Activated CD4-positive, alpha-beta T cell treated with anti-CD3 and anti-CD28 coated beads, Interleukin-2, amount 10 ng/mL, durations not matched to agents 24 days and 14 days (primary cell): ENCODE measurements at regions of chr12 and their contacts with region 1.

Region 1: GRCh38 chr12:94101738-94102660 is 46.4 kb upstream of the PLXNC1 start:
- DNase-seq: peak; percentile 96
- H3K4me3 Mint-ChIP-seq: peak overlapping the region; percentile 88
- H3K27ac Mint-ChIP-seq: peak overlapping the region; percentile 84
- H3K4me1 Mint-ChIP-seq: peaks cover 37% of the 10 kb centered on the region
- H3K27me3 Mint-ChIP-seq: peaks cover 12% of the 10 kb centered on the region

Region 2: GRCh38 chr12:93419388-93420034 is 682.5 kb before region 1 on chr12:
- intact Hi-C with region 1: loop called (anchors 10 kb)
- DNase-seq: peak; percentile 52
- H3K4me3 Mint-ChIP-seq: no peak overlapping the region
- H3K27ac Mint-ChIP-seq: peak overlapping the region; percentile 41
- H3K4me1 Mint-ChIP-seq: peaks cover 62% of the 10 kb centered on the region
- H3K27me3 Mint-ChIP-seq: no peaks in the 10 kb centered on the region

Region 3: DNA sequence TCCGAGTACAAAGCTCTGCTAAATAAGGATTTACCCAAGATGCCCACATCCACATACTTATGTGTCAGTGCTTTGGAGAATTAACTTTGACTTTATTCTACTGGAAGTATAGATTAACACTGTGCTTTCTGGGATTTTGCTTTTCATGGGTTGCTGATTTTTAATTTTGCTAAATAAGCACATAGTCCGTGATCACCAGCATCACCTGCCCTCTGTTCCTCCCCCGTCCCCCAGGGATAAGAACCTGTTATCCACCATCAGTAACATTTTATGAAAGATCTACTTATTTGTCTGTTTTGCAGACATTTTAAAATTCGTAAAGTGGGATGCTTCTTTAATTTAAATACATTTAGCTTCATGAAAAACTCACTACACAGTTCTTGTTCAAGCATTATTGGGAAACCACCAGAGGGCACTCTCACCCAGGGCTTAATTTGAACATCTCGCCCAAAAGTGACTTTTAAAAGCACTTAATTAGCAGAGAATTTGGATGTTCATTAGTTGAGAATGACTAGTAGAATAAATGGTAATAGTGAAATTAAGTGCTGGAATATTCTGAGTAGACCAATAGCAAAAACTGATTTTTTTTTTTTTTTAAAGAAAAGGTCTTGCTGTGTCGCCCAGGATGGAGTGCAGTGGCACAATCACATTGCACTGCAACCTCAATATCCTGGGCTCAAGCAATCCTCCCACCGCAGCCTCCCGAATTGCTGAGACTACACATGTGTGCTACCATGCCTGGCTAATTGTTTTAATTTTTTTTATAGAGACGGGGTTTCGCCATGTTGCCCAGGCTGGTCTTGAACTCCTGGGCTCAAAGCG is 599.0 kb before region 1 on chr12:
- intact Hi-C with region 1: loop called (anchors 1 kb)
- DNase-seq: peak; percentile 90
- H3K4me3 Mint-ChIP-seq: no peak overlapping the region
- H3K27ac Mint-ChIP-seq: no peak overlapping the region
- H3K4me1 Mint-ChIP-seq: peaks cover 18% of the 10 kb centered on the region
- H3K27me3 Mint-ChIP-seq: no peaks in the 10 kb centered on the region

Region 4: GRCh38 chr12:93766796-93767523 is 335.0 kb before region 1 on chr12:
- intact Hi-C with region 1: loop called (anchors 1 kb)
- DNase-seq: peak; percentile 85
- H3K4me3 Mint-ChIP-seq: peak overlapping the region; percentile 31
- H3K27ac Mint-ChIP-seq: no peak overlapping the region
- H3K4me1 Mint-ChIP-seq: peaks cover 40% of the 10 kb centered on the region
- H3K27me3 Mint-ChIP-seq: no peaks in the 10 kb centered on the region

Region 5: DNA sequence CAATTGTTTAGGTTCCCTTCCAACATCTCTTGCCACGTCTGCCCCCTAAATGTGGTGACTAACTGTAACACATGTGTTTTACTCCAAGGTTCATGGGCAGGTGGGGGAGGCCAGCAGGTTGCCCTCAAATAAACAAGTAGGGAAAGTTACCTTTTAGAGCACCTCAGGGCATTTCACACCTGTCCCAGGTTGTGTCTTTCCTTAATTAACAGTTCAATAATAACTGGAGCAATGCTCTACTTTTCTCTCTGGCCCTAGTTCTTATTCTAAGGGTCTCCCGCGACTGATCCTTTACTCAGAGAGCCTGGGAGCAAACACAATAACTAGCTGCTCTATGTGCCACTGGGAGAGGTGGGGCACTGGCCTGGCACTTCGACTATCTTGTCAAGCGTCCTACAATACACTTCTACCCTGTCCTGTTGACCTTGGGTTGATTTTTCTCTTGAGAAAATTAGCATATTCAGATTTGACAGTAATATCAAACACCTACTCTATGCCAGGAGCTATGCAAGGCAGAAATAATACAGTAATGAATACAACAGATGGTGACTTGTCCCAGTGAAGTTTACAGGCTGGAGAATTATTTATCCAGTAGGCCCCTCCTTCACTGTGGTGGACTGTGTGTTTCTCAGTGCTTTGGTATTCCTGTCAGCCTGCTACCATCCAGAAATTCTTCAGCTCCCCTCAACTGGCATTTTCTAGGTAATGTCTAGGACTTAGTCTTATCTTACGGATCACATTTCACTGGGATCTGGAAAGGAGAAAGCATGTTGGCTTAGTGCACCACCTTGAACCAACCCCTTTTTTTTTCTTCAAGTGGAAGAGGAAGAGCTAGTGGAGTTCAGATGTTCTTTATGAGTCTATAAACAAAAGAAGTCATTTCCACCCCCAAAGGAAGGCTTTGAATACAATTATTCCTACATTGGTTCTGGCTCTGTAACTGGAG is 222.2 kb before region 1 on chr12:
- intact Hi-C with region 1: loop called (anchors 10 kb)
- DNase-seq: peak; percentile 54
- H3K4me3 Mint-ChIP-seq: peak overlapping the region; percentile 66
- H3K27ac Mint-ChIP-seq: peak overlapping the region; percentile 87
- H3K4me1 Mint-ChIP-seq: peaks cover 31% of the 10 kb centered on the region
- H3K27me3 Mint-ChIP-seq: no peaks in the 10 kb centered on the region